ENCODE measurements at regions of chr15 and their contacts with region 1.

Region 1: GRCh38 chr15:63640146-63640545 is 43.0 kb downstream of the FBXL22 start:
- DNase-seq: no peak
- ATAC-seq: no peak
- H3K4me3 ChIP-seq: no peak overlapping the region
- H3K27ac ChIP-seq: no peak overlapping the region
- H3K4me1 ChIP-seq: peaks cover 0 to 4% (median 0%) of the 10 kb centered on the region in 9 donors
- H3K27me3 ChIP-seq: no peaks in the 10 kb centered on the region
- CTCF ChIP-seq: no peak

Region 2: GRCh38 chr15:63663906-63664305 is 23.8 kb after region 1 on chr15:
- intact Hi-C with region 1: loop called in 1 of 10 experiments (anchors 2 kb)
- DNase-seq: no peak
- ATAC-seq: peak in 1 of 8 donors; percentile 63
- H3K4me3 ChIP-seq: no peak overlapping the region
- H3K27ac ChIP-seq: no peak overlapping the region
- H3K4me1 ChIP-seq: peaks cover 0 to 11% (median 0%) of the 10 kb centered on the region in 9 donors
- H3K27me3 ChIP-seq: no peaks in the 10 kb centered on the region
- CTCF ChIP-seq: no peak

Region 3: GRCh38 chr15:64400583-64400982 is 760.4 kb after region 1 on chr15:
- intact Hi-C with region 1: loop called in 1 of 10 experiments (anchors 10 kb)
- DNase-seq: no peak
- ATAC-seq: no peak
- H3K4me3 ChIP-seq: no peak overlapping the region
- H3K27ac ChIP-seq: no peak overlapping the region
- H3K4me1 ChIP-seq: no peaks in the 10 kb centered on the region
- H3K27me3 ChIP-seq: no peaks in the 10 kb centered on the region
- CTCF ChIP-seq: no peak

Measured in heart right ventricle (tissue), 16 donors.